Activated CD4-positive, alpha-beta memory T cell treated with anti-CD3 and anti-CD28 coated beads for 36 hours (primary cell): ENCODE measurements at regions of chr2 and their contacts with region 1.

Region 1: DNA sequence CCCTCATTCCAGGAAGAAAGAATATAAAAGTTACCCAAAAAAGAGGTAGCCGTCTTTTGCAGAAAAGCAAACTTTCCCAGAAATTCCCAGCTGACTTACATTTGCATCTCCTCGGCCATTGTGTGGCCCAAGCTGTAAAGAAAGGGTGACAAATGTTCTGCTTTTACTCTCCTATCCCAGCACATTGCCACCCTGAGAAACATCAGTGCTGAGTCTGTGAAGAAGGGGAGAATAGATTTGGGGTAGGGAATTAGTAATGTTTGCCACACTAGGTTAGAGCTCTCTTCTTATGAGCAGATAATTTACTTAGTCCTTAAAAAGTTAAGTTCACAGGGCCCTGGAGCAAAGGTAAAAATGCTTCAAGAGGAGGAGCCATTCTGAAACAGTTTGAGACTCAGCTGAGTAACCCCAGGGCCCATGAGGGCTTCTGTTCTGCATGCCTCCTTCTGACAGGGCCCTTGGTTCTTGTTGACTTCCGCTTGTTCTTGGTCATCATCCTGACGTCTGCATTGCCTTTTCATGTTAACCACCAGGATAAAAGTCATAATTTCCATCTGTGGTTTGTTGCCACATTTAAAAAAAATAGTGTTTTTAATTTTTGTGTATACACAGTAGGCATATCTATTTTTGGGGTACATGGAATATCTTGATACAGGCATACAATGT is 550.7 kb downstream of the RNF144A start:
- DNase-seq: peak; percentile 75
- H3K4me3 Mint-ChIP-seq: peak overlapping the region; percentile 17
- H3K27ac Mint-ChIP-seq: peak overlapping the region; percentile 95
- H3K4me1 Mint-ChIP-seq: peaks cover 41% of the 10 kb centered on the region
- H3K27me3 Mint-ChIP-seq: peaks cover 7% of the 10 kb centered on the region

Region 2: DNA sequence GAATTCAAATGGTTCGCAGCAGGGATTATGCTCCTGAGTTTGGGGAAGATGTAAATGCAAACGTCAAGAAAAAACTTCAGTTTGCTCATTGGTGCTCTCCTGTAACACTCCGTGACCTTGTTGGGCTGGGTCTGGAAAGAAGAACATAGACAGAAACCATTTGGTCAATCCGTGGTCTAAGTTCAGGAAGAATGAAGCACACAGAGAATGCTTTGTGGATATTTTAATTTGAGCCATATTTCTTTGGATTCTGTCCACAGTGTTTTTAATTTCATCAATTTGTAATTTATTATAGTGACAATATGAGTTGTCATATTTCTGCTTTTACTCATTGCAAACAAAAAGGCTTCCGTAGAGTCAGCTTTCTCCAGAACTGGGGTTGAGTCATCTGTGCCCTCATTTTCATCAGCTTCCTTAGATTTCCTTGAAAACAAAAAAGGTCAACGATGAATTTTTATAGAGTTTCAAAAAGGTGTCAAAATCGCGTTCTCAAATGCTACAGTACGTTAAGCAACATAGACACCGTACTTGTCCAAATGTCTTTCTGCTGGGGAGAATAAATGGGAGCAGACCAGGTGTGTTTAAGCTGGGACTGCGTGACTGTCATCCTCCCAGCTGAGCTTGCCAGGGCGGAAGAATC is 55.7 kb after region 1 on chr2:
- CTCF ChIA-PET with region 1: no interaction called
- POLR2A ChIA-PET with region 1: no interaction called
- intact Hi-C with region 1: loop called (anchors 2 kb)
- DNase-seq: no peak
- H3K4me3 Mint-ChIP-seq: peak overlapping the region; percentile 58
- H3K27ac Mint-ChIP-seq: peak overlapping the region; percentile 91
- H3K4me1 Mint-ChIP-seq: peaks cover 50% of the 10 kb centered on the region
- H3K27me3 Mint-ChIP-seq: no peaks in the 10 kb centered on the region